ENCODE measurements at regions of chr1 and their contacts with region 1.

Region 1: GRCh38 chr1:233790662-233791375 is 113.7 kb upstream of the SLC35F3 start:
- DNase-seq: no peak
- H3K4me3 ChIP-seq: no peak overlapping the region
- H3K27ac ChIP-seq: no peak overlapping the region
- H3K4me1 ChIP-seq: no peaks in the 10 kb centered on the region
- H3K27me3 ChIP-seq: peaks cover 0 to 37% (median 0%) of the 10 kb centered on the region in 7 donors
- CTCF ChIP-seq: peak; percentile 58 to 82 (median 74)
- POLR2A ChIP-seq: no peak

Region 2: DNA sequence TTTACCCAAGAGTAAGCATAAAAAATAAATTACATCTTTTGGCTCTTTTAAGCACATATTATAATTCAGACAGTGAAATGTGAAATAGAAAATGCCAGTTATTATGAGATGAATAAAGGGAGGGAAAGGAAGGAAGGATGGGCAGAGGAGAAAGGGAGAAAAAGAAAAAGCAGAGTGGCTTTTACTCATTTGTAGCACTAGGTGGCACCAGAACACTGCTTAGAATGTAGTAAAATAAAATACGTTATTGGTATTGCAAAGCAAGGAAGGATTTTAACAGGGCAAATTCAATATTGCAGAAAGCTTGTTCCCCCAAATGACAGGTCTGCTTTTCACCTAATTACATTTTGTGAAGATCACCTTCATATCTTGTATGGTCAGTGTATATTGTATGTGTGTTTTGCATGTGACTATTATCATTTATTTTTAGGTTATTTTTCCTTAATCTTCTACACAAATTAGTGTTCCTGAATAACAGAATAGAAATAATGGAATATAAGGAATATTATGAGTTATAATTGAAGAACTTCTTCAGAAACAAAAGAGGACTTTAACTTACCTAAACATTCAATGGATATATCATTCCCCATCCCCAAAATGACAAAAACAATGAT is 486.2 kb before region 1 on chr1:
- intact Hi-C with region 1: loop called (anchors 5 kb)
- DNase-seq: no peak
- H3K4me3 ChIP-seq: no peak overlapping the region
- H3K27ac ChIP-seq: no peak overlapping the region
- H3K4me1 ChIP-seq: no peaks in the 10 kb centered on the region
- H3K27me3 ChIP-seq: peaks cover 0 to 20% (median 0%) of the 10 kb centered on the region in 7 donors
- CTCF ChIP-seq: peak; percentile 49 to 78 (median 73)
- POLR2A ChIP-seq: no peak

Region 3: DNA sequence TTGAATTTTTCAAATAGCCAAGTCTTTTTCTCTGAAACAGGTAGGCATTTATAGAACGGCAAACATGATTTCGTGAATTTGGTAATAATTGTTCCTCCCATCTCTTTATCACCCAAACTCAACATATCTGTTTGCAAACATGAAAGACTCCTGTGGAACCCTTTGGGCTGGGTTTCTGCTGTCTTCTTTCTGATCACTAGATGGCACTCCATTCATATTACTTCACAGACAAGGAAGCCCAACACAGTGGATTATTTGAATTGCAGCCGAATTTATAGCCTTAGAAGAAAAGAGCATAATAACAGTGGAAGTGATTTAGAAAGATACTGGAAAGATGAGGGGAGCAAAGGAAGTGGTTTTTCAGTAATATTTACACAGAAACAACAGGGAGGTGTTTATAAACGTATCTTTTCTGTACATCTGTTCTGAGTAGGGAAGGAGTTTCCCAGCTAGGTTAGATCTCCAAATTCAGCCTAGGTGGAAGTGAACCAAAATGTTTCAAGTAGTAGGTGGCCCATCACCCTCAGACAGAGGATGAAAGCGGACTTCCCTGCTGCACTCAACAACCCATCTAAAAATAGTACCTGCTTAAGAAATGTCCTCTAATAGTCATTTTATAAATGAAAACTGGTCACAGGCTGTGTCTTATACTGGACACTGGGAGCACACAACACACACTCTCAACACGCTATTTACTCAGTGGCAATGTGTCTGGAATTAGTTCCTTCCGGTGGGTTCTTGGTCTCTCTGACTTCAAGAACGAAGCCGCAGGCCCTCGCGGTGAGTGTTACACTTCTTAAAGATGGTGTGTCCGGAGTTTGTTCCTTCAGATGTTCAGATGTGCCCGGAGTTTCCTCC is 395.7 kb before region 1 on chr1:
- intact Hi-C with region 1: loop called (anchors 10 kb)
- DNase-seq: no peak
- H3K4me3 ChIP-seq: no peak overlapping the region
- H3K27ac ChIP-seq: no peak overlapping the region
- H3K4me1 ChIP-seq: no peaks in the 10 kb centered on the region
- H3K27me3 ChIP-seq: peaks cover 0 to 45% (median 0%) of the 10 kb centered on the region in 7 donors
- CTCF ChIP-seq: peak in 8 of 11 experiments; percentile 20 to 76 (median 52)
- POLR2A ChIP-seq: no peak

Region 4: DNA sequence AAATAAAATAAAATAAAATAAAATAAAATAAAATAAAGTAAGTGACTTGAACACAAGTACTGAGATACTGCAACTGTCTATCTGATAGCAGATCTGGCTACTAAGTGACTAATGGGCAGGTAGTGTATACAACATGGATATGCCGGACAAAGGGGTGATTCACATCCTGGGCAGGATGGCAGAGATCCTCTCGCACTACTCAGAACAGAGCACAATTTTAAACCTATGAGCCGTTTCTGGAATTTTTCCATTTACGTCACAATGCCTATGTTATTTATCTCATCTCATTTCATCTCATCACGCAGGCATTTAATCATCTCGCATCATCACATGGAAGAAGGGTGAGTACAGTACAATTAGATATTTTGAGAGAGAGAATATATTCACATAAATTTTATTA is 349.1 kb after region 1 on chr1:
- intact Hi-C with region 1: no loop called
- DNase-seq: no peak
- H3K4me3 ChIP-seq: no peak overlapping the region
- H3K27ac ChIP-seq: no peak overlapping the region
- H3K4me1 ChIP-seq: no peaks in the 10 kb centered on the region
- H3K27me3 ChIP-seq: peaks cover 0 to 5% (median 0%) of the 10 kb centered on the region in 7 donors
- CTCF ChIP-seq: no peak
- POLR2A ChIP-seq: no peak

Region 5: DNA sequence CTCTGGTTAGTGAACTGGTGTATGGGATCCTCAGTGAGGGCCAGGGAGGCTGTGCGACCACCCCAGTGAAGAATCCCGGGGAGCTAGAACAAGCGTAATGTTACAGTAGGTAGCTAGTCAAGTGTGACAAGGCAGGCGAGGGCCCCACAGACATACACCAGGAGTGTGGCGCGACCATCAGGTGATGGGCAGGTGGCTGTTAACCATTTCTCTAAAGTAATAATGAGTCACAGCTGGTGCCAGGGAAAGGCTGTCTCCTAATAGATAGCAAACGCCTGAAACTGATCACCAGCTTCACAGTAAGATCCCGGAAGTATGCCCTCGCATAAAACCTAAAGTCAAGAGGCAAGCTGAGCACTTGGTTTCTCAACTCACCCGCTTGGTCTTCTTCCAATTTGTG is 728.7 kb after region 1 on chr1:
- intact Hi-C with region 1: no loop called
- DNase-seq: no peak
- H3K4me3 ChIP-seq: no peak overlapping the region
- H3K27ac ChIP-seq: peak overlapping the region in 1 of 8 donors; percentile 18
- H3K4me1 ChIP-seq: peaks cover 13 to 68% (median 24%) of the 10 kb centered on the region in 6 donors
- H3K27me3 ChIP-seq: no peaks in the 10 kb centered on the region
- CTCF ChIP-seq: no peak
- POLR2A ChIP-seq: no peak

Measured in spleen (tissue), 13 donors.